ENCODE measurements at regions of chr5 and their contacts with region 1.

Region 1: DNA sequence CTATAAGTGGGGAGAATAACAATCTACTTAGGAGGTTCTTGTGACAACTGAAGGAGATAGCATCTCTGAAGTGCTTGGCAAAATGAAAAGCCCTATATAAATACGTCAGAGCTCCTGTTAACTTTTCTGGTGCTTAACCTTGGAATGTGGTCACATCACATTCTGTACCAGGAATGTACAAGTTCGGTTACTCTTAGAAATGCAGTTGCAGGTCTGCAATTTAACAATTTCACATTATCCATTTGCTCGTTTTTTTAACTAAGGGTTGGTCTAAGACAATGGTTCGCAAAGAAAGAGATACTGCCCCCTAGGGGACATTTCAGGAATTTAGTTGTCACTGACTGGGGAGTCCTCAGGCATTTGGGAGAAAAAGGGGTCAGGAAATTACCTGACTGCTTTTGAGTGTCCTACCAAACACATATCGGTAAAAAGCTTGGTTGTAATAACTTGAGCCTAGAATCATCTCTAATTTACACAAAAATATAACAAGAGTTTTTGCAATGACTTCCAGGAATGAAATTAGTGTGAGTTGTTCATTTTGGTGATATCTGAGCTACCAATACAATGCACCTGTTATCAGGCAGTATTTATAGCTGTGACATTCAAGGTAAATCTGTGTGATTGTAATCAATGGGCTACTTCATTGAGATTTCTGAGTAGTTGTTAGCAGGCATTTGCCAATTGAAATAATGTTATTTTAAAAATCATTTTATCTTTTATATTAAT is 5.4 kb upstream of the HBEGF start:
- DNase-seq: peak in 28 of 35 experiments; percentile 9 to 87 (median 41)
- ATAC-seq: peak; percentile 82 to 93 (median 84)
- H3K4me3 ChIP-seq: no peak overlapping the region
- H3K4me3 Mint-ChIP-seq: no peak overlapping the region
- H3K27ac ChIP-seq: no peak overlapping the region
- H3K27ac Mint-ChIP-seq: no peak overlapping the region
- H3K4me1 ChIP-seq: peaks cover 6% of the 10 kb centered on the region in 2 experiments
- H3K4me1 Mint-ChIP-seq: peaks cover 12 to 15% (median 12%) of the 10 kb centered on the region in 3 donors
- H3K27me3 ChIP-seq: peaks cover 0 to 20% of the 10 kb centered on the region in 2 experiments
- H3K27me3 Mint-ChIP-seq: peaks cover 0 to 11% of the 10 kb centered on the region in 2 donors

Region 2: DNA sequence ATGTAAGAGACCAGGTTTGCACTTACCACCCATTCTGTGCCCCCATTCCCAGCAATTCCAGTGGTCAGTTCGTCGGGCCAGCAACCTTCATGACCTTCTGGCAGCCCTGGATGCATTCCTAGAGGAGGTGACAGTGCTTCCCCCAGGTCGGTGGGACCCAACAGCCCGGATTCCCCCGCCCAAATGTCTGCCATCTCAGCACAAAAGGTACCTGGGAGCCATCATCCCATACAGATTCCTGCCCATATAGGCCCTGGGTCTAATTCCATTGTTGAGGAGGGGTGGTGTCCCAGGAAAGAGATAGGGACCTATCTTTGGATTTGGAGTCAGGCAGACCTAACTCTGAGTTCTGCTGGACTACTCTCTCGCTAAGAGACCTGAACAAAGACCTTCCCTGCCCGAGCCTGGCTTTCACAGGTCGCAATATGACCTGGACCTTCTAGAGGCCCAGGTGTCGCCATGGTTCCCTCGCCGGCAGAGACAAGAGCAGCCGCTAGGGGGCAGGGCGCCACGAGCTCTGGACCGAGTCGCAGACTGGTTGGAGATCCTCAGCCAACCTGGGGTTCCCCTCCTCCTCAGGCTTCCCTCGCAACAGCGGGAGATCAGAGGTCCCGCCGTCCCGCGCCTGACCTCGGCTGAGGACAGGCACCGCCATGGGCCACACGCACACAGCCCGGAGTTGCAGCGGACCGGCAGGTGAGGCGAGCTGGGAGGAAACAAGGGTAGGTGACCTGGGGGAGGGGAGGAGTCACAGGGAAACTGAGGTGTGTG is 11.3 kb after region 1 on chr5:
- CTCF ChIA-PET with region 1: interaction called, 4 to 22 read pairs
- POLR2A ChIA-PET with region 1: no interaction called
- DNase-seq: peak; percentile 45 to 87 (median 75)
- ATAC-seq: peak; percentile 89 to 98 (median 91)
- H3K4me3 ChIP-seq: peak overlapping the region; percentile 1 to 35
- H3K4me3 Mint-ChIP-seq: peak overlapping the region; percentile 63 to 68 (median 68)
- H3K27ac ChIP-seq: no peak overlapping the region
- H3K27ac Mint-ChIP-seq: no peak overlapping the region
- H3K4me1 ChIP-seq: peaks cover 0 to 9% of the 10 kb centered on the region in 2 experiments
- H3K4me1 Mint-ChIP-seq: peaks cover 4 to 7% (median 4%) of the 10 kb centered on the region in 3 donors
- H3K27me3 ChIP-seq: peaks cover 0 to 12% of the 10 kb centered on the region in 2 experiments
- H3K27me3 Mint-ChIP-seq: peaks cover 0 to 4% of the 10 kb centered on the region in 2 donors

Region 3: DNA sequence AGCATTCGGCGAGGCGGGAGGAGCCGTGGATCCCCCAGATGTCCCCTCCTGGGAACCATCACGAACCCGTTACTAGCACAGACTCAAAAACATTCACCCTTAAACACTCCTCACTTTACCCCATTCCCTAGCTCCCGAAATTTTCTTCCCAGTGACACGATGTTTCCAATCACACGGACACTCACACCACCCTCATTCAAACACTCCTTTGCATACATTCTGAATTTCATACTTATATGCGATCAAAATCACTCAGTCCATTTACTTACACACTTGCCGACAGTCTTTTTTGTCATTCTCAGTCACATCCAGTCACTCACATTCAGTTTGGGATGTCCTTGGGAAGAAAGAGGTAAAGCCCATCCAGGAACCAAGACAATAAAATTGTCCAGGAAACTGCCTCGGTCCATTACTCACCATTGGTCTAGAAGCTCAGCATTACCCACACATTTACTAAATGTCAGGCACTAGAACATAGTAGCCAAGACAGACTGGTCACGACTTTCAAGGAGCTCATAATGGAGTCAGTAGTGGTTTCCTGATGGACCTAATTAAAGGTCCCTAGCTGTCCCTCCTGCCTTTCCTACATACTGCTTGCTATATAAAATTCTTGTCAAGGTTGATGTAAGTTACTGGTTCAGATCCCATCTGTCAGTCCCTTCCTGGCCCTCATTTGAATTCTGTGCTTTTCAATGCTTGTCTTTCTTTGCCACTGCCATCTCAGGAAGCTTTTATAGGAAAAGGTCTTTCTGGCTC is 213.4 kb after region 1 on chr5:
- CTCF ChIA-PET with region 1: no interaction called
- POLR2A ChIA-PET with region 1: no interaction called
- DNase-seq: no peak
- ATAC-seq: peak in 1 of 4 experiments; percentile 1
- H3K4me3 ChIP-seq: peak overlapping the region; percentile 65 to 96
- H3K4me3 Mint-ChIP-seq: peak overlapping the region; percentile 90 to 98 (median 94)
- H3K27ac ChIP-seq: peak overlapping the region; percentile 83
- H3K27ac Mint-ChIP-seq: peak overlapping the region; percentile 96 to 99
- H3K4me1 ChIP-seq: peaks cover 13 to 53% of the 10 kb centered on the region in 2 experiments
- H3K4me1 Mint-ChIP-seq: peaks cover 67 to 79% (median 74%) of the 10 kb centered on the region in 3 donors
- H3K27me3 ChIP-seq: no peaks in the 10 kb centered on the region
- H3K27me3 Mint-ChIP-seq: no peaks in the 10 kb centered on the region